Naive thymus-derived CD4-positive, alpha-beta T cell (primary cell): ENCODE measurements at regions of chr12 and their contacts with region 1.

Region 1: DNA sequence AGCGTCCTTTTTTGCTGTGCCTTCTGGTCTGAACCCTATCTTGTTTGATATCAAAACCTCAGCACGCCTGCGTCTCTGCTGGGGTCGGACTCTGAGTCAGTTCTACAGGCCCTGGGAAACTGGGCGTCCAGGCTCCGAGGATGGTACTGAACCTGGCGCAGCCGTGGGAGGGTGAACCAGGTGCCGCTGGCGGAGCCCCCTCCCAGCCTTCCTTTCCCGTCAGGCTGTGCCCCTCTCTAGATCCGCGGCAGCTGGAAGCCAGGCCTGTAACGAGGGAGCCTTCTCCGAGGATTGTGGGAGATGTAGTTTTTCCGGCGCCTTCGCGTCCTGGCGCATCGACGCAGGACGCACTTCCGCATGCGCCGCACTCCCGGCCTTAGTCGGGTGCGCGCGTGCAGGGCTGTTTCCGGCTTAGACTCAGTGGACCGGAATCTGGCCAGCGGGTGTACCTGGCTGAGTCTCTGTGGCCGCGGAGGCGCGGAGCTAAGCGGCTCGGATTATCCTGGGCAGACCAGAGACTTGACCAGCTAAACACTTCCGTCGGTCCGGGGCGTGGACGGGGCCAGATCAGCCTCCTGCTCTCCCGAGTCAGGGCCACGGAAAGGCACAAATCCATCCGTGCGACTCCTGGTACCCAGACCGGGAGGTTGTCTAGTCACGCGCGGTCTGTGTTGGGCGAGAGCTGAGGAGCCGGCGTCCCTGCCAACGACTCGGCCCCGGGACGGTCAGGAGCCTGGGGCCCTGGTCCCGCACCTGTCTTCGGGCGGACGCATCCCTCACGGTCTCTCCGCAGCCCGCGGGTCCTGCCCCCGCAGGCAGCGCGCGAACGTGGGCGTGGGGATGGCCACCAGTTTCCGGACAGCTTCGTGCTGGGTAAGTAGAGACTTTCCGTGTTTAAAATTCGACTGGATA is at the start of gene ZNF26:
- DNase-seq: peak; percentile 66 to 90 (median 86)
- ATAC-seq: peak; percentile 99
- H3K4me3 ChIP-seq: peak within 1 kb of the TSS; percentile 96
- H3K4me3 Mint-ChIP-seq: peak within 1 kb of the TSS; percentile 84 to 98 (median 94)
- H3K27ac ChIP-seq: peak within 1 kb of the TSS; percentile 87
- H3K27ac Mint-ChIP-seq: peak within 1 kb of the TSS; percentile 90 to 98 (median 97)
- H3K4me1 ChIP-seq: peaks cover 11 to 12% of the 10 kb centered on the region in 2 donors
- H3K4me1 Mint-ChIP-seq: peaks cover 23 to 42% (median 39%) of the 10 kb centered on the region in 7 donors
- H3K27me3 ChIP-seq: no peaks in the 10 kb centered on the region
- H3K27me3 Mint-ChIP-seq: peaks cover 0 to 10% (median 4%) of the 10 kb centered on the region in 5 donors
- total RNA-seq, gene ZNF26: 16.0 to 38.8 (median 33.6) TPM

Region 2: GRCh38 chr12:132066345-132066685 is 919.9 kb before region 1 on chr12:
- CTCF ChIA-PET with region 1: no interaction called
- POLR2A ChIA-PET with region 1: no interaction called
- intact Hi-C with region 1: no loop called
- DNase-seq: peak in 8 of 9 donors; percentile 23 to 43 (median 34)
- ATAC-seq: peak; percentile 45
- H3K4me3 ChIP-seq: peak overlapping the region; percentile 5
- H3K4me3 Mint-ChIP-seq: peak overlapping the region; percentile 78 to 94 (median 86)
- H3K27ac ChIP-seq: no peak overlapping the region
- H3K27ac Mint-ChIP-seq: peak overlapping the region; percentile 71 to 93 (median 91)
- H3K4me1 ChIP-seq: peaks cover 15 to 16% of the 10 kb centered on the region in 2 donors
- H3K4me1 Mint-ChIP-seq: peaks cover 12 to 32% (median 22%) of the 10 kb centered on the region in 7 donors
- H3K27me3 ChIP-seq: no peaks in the 10 kb centered on the region
- H3K27me3 Mint-ChIP-seq: no peaks in the 10 kb centered on the region

Region 3: DNA sequence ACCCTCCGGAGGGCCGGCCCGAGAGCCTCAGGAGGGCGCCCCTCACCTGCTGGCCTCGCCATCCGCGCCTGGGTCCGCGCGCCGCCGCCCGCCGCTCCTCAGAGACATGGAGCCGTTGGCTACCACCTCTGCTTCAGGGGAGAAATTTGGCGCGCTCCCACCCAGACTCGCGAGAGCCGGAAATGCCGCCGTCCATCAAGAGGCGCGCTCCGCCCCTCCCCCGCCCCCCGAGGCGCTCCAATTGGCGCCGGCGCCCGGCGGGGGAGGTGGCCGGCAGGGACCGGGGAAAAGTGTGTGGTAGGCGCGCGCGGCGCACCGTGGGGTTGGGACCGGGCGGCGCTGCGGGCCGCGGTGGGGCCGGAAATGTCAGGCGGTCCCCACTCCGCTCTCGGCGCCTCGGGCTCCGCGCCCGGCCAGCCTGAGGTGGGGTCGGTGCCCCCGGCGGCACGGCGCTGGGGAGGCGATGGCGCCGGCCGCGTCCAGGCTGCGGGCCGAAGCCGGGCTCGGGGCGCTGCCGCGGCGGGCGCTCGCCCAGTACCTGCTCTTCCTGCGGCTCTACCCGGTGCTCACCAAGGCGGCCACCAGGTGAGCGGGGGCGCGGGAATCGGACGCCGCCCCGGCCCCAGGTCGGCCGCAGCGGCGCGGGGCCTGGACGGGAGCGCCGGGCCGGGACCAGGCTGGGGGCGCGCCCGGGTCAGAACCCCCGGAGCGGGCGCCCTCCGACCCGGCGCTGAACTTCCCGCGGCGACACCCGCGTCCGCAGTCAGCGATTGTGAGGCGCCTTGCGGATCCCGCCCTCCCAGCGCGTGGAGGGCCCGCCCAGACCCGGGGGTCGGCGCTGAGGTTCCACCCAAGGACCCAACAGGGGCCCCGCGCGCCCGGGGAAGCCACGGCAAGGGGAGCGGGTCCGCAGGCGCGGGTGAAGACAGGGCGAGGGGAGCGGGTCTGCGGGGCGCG is 298.8 kb before region 1 on chr12 and contains the starts of genes POLE and PXMP2:
- CTCF ChIA-PET with region 1: no interaction called
- POLR2A ChIA-PET with region 1: no interaction called
- intact Hi-C with region 1: loop called in 1 of 2 experiments (anchors 1 kb)
- DNase-seq: peak; percentile 85 to 94 (median 89)
- ATAC-seq: peak; percentile 98
- H3K4me3 ChIP-seq: peak within 1 kb of the TSS; percentile 47
- H3K4me3 Mint-ChIP-seq: peak within 1 kb of the TSS; percentile 65 to 89 (median 84)
- H3K27ac ChIP-seq: peak within 1 kb of the TSS; percentile 58
- H3K27ac Mint-ChIP-seq: peak within 1 kb of the TSS in 3 of 9 donors; percentile 45 to 92 (median 87)
- H3K4me1 ChIP-seq: peaks cover 4 to 14% of the 10 kb centered on the region in 2 donors
- H3K4me1 Mint-ChIP-seq: peaks cover 0 to 31% (median 22%) of the 10 kb centered on the region in 7 donors
- H3K27me3 ChIP-seq: no peaks in the 10 kb centered on the region
- H3K27me3 Mint-ChIP-seq: no peaks in the 10 kb centered on the region
- total RNA-seq, gene POLE: 54.5 to 138 (median 62.1) TPM
- total RNA-seq, gene PXMP2: 2.6 to 26.8 (median 5.4) TPM

Region 4: GRCh38 chr12:132956011-132956788 is 30.1 kb before region 1 on chr12 and contains the start of gene ZNF605:
- CTCF ChIA-PET with region 1: no interaction called
- POLR2A ChIA-PET with region 1: interaction called, 13 read pairs
- intact Hi-C with region 1: loop called (anchors 1 kb)
- DNase-seq: peak; percentile 72 to 89 (median 80)
- ATAC-seq: peak; percentile 96
- H3K4me3 ChIP-seq: peak within 1 kb of the TSS; percentile 100
- H3K4me3 Mint-ChIP-seq: peak within 1 kb of the TSS; percentile 90 to 97 (median 95)
- H3K27ac ChIP-seq: peak within 1 kb of the TSS; percentile 85
- H3K27ac Mint-ChIP-seq: peak within 1 kb of the TSS; percentile 83 to 96 (median 91)
- H3K4me1 ChIP-seq: peaks cover 6 to 7% of the 10 kb centered on the region in 2 donors
- H3K4me1 Mint-ChIP-seq: peaks cover 19 to 53% (median 37%) of the 10 kb centered on the region in 7 donors
- H3K27me3 ChIP-seq: no peaks in the 10 kb centered on the region
- H3K27me3 Mint-ChIP-seq: no peaks in the 10 kb centered on the region
- total RNA-seq, gene ZNF605: 5.4 to 17.8 (median 11.8) TPM

Region 5: DNA sequence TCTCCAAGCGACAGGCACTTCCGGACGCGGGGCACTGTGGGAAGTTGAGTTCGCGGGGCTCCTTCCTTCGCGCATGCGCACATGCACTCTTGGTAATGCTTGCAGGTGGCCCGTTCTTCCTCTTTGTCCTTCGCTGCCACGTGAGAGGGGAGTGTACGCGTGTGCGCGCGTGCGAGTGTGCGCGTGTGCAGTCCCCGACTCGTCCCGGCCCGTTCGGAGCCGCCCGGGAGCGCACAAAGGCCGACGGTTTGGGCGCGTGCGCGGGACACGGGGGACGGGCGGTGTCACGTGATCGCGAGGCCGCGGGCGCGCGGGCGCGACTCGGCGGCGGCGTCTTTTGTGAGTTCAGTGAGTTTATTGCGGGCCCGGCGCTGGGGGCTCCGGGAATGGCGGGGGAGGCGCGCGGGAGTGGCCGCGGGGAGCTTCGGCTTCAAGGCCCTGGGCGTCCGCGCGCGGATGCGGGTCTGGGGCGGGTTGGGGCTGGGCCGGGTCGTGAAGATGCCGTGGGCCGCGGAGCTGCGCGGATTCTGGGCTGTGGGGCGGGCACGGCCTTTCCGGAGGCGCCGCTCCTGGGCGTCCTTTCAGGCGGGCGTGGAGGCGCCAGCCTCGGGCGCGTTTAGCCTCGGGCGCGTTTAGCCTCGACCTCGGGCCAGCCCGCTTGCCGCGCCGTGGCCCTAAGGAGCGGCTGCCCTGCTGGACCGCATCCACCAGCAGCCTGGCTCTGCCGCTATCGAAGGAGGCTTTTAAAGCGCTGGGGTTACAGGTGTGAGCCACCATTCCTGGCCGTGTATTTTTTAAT is 51.1 kb after region 1 on chr12 and contains the start of gene ZNF84:
- CTCF ChIA-PET with region 1: no interaction called
- POLR2A ChIA-PET with region 1: interaction called, 17 read pairs
- intact Hi-C with region 1: loop called (anchors 1 kb)
- DNase-seq: peak; percentile 93 to 99 (median 97)
- ATAC-seq: peak; percentile 96
- H3K4me3 ChIP-seq: peak within 1 kb of the TSS; percentile 65
- H3K4me3 Mint-ChIP-seq: peak within 1 kb of the TSS; percentile 78 to 96 (median 94)
- H3K27ac ChIP-seq: peak within 1 kb of the TSS; percentile 94
- H3K27ac Mint-ChIP-seq: peak within 1 kb of the TSS; percentile 87 to 99 (median 94)
- H3K4me1 ChIP-seq: peaks cover 0 to 4% of the 10 kb centered on the region in 2 donors
- H3K4me1 Mint-ChIP-seq: peaks cover 0 to 37% (median 13%) of the 10 kb centered on the region in 7 donors
- H3K27me3 ChIP-seq: no peaks in the 10 kb centered on the region
- H3K27me3 Mint-ChIP-seq: peaks cover 0 to 9% (median 3%) of the 10 kb centered on the region in 5 donors
- total RNA-seq, gene ZNF84: 27.4 to 52.7 (median 31.6) TPM

Region 6: GRCh38 chr12:133130038-133130807 is 144.0 kb after region 1 on chr12 and contains the starts of genes ZNF10 and ZNF891:
- CTCF ChIA-PET with region 1: no interaction called
- POLR2A ChIA-PET with region 1: interaction called, 15 read pairs
- intact Hi-C with region 1: loop called (anchors 1 kb)
- DNase-seq: peak; percentile 96 to 99 (median 98)
- ATAC-seq: peak; percentile 93
- H3K4me3 ChIP-seq: peak within 1 kb of the TSS; percentile 62
- H3K4me3 Mint-ChIP-seq: peak within 1 kb of the TSS; percentile 90 to 99 (median 94)
- H3K27ac ChIP-seq: peak within 1 kb of the TSS; percentile 98
- H3K27ac Mint-ChIP-seq: peak within 1 kb of the TSS; percentile 97 to 100 (median 99)
- H3K4me1 ChIP-seq: peaks cover 0 to 7% of the 10 kb centered on the region in 2 donors
- H3K4me1 Mint-ChIP-seq: peaks cover 15 to 51% (median 27%) of the 10 kb centered on the region in 7 donors
- H3K27me3 ChIP-seq: no peaks in the 10 kb centered on the region
- H3K27me3 Mint-ChIP-seq: no peaks in the 10 kb centered on the region
- total RNA-seq, gene ZNF10: 5.2 to 35.0 (median 29.2) TPM
- total RNA-seq, gene ZNF891: 2.4 to 7.9 (median 6.6) TPM

Region 7: DNA sequence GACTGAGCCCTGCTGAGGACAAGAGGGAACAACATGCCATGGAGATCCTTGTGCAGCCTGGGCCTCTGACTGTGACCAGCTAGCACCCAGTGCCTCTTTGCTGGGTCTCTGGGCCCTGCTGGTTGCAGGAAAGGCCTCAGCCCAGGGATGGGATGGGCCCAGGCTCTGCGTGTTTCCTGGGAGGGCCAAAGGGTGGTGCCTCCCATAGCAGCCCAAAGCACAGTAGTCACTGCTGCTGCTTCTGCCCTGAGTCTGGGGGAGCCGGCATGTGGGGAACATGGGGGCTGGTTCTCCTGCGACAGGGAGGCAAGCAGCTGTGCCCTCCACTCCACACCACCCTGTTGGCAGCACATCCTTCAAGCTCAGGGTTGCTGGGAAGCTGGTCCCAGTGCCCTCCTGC is 231.0 kb after region 1 on chr12:
- CTCF ChIA-PET with region 1: no interaction called
- POLR2A ChIA-PET with region 1: no interaction called
- intact Hi-C with region 1: no loop called
- DNase-seq: no peak
- ATAC-seq: no peak
- H3K4me3 ChIP-seq: no peak overlapping the region
- H3K4me3 Mint-ChIP-seq: no peak overlapping the region
- H3K27ac ChIP-seq: no peak overlapping the region
- H3K27ac Mint-ChIP-seq: no peak overlapping the region
- H3K4me1 ChIP-seq: no peaks in the 10 kb centered on the region
- H3K4me1 Mint-ChIP-seq: no peaks in the 10 kb centered on the region
- H3K27me3 ChIP-seq: no peaks in the 10 kb centered on the region
- H3K27me3 Mint-ChIP-seq: peaks cover 0 to 19% (median 3%) of the 10 kb centered on the region in 5 donors